GM12878 (cell line): ENCODE measurements at regions of chrX and their contacts with region 1.

Region 1: DNA sequence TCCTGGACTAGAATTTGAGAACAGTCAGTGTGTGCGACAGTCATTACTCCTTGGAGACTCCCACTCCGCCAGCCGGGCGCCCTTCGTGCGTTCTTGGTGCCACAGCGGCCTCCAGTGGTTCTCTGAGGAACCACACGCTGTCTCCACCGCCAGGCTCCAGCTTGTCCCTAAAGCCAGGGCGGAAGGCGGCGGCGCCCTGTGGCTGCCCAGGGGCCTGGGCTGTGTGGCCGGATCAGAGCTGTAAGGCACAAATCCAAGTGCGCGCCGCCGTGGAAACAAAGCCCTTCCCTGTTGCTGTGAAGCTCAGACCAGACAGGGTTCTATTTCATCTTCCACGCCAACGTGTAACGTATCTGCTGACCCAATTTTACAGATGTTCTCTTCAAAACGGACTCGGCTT is 34.2 kb downstream of the IDS start:
- DNase-seq: no peak
- ATAC-seq: peak; percentile 97
- H3K4me3 ChIP-seq: no peak overlapping the region
- H3K27ac ChIP-seq: no peak overlapping the region
- H3K4me1 ChIP-seq: no peaks in the 10 kb centered on the region
- H3K27me3 ChIP-seq: no peaks in the 10 kb centered on the region; a peak in 1 of 4 replicates
- CTCF ChIP-seq: peak; percentile 80 to 94 (median 93)
- EP300 ChIP-seq: no peak
- POLR2A ChIP-seq: no peak
- RAD21 ChIP-seq: peak; percentile 86

Region 2: DNA sequence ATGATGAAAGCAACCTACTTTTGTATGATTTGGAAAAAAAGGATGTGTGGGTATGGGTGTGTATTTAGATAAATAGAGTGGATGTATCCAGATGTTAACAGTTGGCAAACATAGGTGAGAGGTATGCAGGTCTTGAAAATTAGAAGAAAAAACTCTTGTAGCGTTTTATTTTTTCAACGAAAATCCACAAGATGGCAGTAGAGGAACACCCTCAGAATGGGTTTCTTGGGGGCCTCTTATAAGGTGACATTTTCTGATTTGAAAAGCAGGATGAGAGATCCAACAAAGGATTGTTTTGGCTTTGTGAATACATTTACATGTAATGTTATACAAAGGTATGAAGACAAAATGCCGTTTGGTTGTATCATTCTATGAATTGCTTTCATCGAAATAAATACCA is 1421.5 kb before region 1 on chrX:
- CTCF ChIA-PET with region 1: interaction called, 59 read pairs
- POLR2A ChIA-PET with region 1: no interaction called
- RAD21 ChIA-PET with region 1: interaction called, 9 read pairs
- SMC1A ChIA-PET with region 1: interaction called, 13 read pairs
- in situ Hi-C with region 1: loop called (anchors 5 kb)
- intact Hi-C with region 1: loop called (anchors 2 kb)
- DNase-seq: no peak
- ATAC-seq: peak; percentile 69
- H3K4me3 ChIP-seq: no peak overlapping the region
- H3K27ac ChIP-seq: no peak overlapping the region
- H3K4me1 ChIP-seq: no peaks in the 10 kb centered on the region
- H3K27me3 ChIP-seq: no peaks in the 10 kb centered on the region
- CTCF ChIP-seq: peak; percentile 46 to 62 (median 49); a peak in 5 of 6 replicates
- EP300 ChIP-seq: no peak
- POLR2A ChIP-seq: no peak
- RAD21 ChIP-seq: peak; percentile 90

Region 3: GRCh38 chrX:148530464-148531077 is 940.4 kb before region 1 on chrX:
- CTCF ChIA-PET with region 1: interaction called, 4 read pairs
- POLR2A ChIA-PET with region 1: no interaction called
- RAD21 ChIA-PET with region 1: interaction called, 5 read pairs
- SMC1A ChIA-PET with region 1: interaction called, 8 read pairs
- in situ Hi-C with region 1: no loop called
- intact Hi-C with region 1: loop called (anchors 1 kb)
- DNase-seq: no peak
- ATAC-seq: no peak; the same call in 2 of the 3 replicates
- H3K4me3 ChIP-seq: no peak overlapping the region
- H3K27ac ChIP-seq: no peak overlapping the region
- H3K4me1 ChIP-seq: no peaks in the 10 kb centered on the region
- H3K27me3 ChIP-seq: no peaks in the 10 kb centered on the region
- CTCF ChIP-seq: peak; percentile 47 to 74 (median 58); a peak in 5 of 6 replicates
- EP300 ChIP-seq: no peak
- POLR2A ChIP-seq: no peak
- RAD21 ChIP-seq: peak; percentile 43

Region 4: GRCh38 chrX:148885207-148885606 is 585.7 kb before region 1 on chrX:
- CTCF ChIA-PET with region 1: interaction called, 10 read pairs
- POLR2A ChIA-PET with region 1: no interaction called
- RAD21 ChIA-PET with region 1: interaction called, 13 read pairs
- SMC1A ChIA-PET with region 1: interaction called, 7 read pairs
- in situ Hi-C with region 1: no loop called
- intact Hi-C with region 1: loop called (anchors 10 kb)
- DNase-seq: no peak
- ATAC-seq: peak; percentile 61
- H3K4me3 ChIP-seq: no peak overlapping the region
- H3K27ac ChIP-seq: no peak overlapping the region
- H3K4me1 ChIP-seq: no peaks in the 10 kb centered on the region
- H3K27me3 ChIP-seq: no peaks in the 10 kb centered on the region
- CTCF ChIP-seq: peak in 1 of 3 experiments; percentile 27; a peak in 3 of 6 replicates
- EP300 ChIP-seq: no peak
- POLR2A ChIP-seq: no peak
- RAD21 ChIP-seq: peak; percentile 44